ENCODE measurements at regions of chr17 and their contacts with region 1.

Region 1: DNA sequence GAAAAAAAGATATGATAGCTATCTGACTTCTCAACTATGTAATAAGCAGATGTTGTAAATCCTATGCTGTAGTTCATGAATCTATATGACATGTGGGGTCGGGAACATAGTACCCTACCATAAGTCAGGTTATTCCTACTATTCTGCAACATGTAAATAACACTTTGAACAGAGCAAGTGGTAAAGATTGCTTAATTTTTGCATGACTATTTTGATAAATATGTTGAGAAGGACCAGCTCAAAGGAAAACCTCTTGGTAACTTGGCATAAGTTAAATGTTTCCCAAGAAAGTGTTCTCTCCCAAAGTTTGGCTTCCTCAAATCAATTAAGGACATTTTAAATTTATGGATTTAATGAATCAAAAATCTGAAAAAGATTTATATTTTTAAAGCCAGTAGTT is 62.1 kb downstream of the ABHD15 start:
- DNase-seq: no peak
- ATAC-seq: no peak
- H3K4me3 ChIP-seq: no peak overlapping the region
- H3K27ac ChIP-seq: no peak overlapping the region
- H3K4me1 ChIP-seq: no peaks in the 10 kb centered on the region
- H3K27me3 ChIP-seq: no peaks in the 10 kb centered on the region
- CTCF ChIP-seq: no peak
- POLR2A ChIP-seq: no peak
- RAD21 ChIP-seq: no peak

Region 2: DNA sequence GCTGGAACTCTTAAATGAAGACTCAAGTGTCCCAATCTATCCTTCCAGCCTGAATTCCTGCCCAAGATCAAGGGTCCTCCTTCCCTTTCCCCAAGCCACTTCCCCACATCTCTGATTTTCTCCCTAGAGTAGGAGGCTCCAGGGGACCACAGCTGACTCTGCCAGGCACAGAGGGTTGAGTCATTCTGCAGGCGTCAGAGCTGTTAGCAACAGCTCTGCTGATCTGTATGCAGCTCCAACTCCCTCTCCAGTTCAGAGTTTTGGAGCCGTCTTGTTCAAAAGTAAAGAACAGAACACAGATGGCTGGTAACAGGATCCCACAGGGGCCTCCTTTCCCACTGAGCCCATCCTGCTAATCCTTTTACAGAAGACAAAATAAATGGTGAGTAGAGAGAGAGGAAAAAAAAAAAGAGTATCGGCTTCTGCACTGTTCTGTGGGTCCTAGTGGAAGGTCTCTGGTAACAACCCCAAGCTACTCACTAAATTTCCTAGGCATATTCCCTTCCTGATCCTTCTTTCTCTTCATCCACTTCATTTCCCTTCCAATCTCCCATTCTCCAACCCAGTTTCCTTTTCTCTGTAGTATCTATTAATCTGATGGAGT is 127.9 kb before region 1 on chr17:
- CTCF ChIA-PET with region 1: no interaction called
- POLR2A ChIA-PET with region 1: no interaction called
- RAD21 ChIA-PET with region 1: no interaction called
- intact Hi-C with region 1: no loop called
- DNase-seq: no peak
- ATAC-seq: no peak; the same call in 1 of the 2 replicates
- H3K4me3 ChIP-seq: no peak overlapping the region
- H3K27ac ChIP-seq: no peak overlapping the region
- H3K4me1 ChIP-seq: peaks cover 0 to 17% of the 10 kb centered on the region in 2 experiments; a peak in 2 of 4 replicates
- H3K27me3 ChIP-seq: no peaks in the 10 kb centered on the region
- CTCF ChIP-seq: no peak
- POLR2A ChIP-seq: no peak
- RAD21 ChIP-seq: no peak

Region 3: DNA sequence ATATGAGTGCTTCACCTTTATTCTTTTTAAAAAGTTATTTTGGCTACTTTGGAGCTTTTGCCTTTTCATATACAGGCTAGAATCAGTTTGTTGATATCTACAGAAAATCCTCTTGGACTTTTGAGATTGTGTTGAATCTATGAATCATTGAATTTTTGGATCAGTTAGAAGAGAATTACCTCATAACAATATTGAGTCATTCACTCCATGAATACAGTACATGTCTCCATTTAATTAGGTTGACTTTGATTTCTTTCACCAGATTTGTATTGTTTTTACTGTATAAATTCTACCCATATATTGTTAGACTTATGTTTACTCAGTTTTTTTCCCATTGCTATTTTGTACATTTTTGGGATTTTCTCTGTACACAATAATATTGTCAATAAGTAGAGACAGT is 60.1 kb before region 1 on chr17:
- CTCF ChIA-PET with region 1: no interaction called
- POLR2A ChIA-PET with region 1: no interaction called
- RAD21 ChIA-PET with region 1: no interaction called
- intact Hi-C with region 1: no loop called
- DNase-seq: no peak
- ATAC-seq: no peak
- H3K4me3 ChIP-seq: no peak overlapping the region
- H3K27ac ChIP-seq: no peak overlapping the region
- H3K4me1 ChIP-seq: no peaks in the 10 kb centered on the region
- H3K27me3 ChIP-seq: no peaks in the 10 kb centered on the region
- CTCF ChIP-seq: no peak
- POLR2A ChIP-seq: no peak
- RAD21 ChIP-seq: no peak

Region 4: GRCh38 chr17:29474297-29474696 is 30.4 kb before region 1 on chr17:
- CTCF ChIA-PET with region 1: no interaction called
- POLR2A ChIA-PET with region 1: no interaction called
- RAD21 ChIA-PET with region 1: no interaction called
- intact Hi-C with region 1: loop called (anchors 5 kb)
- DNase-seq: no peak
- ATAC-seq: no peak
- H3K4me3 ChIP-seq: no peak overlapping the region
- H3K27ac ChIP-seq: no peak overlapping the region
- H3K4me1 ChIP-seq: no peaks in the 10 kb centered on the region
- H3K27me3 ChIP-seq: no peaks in the 10 kb centered on the region
- CTCF ChIP-seq: no peak
- POLR2A ChIP-seq: no peak
- RAD21 ChIP-seq: no peak

Region 5: DNA sequence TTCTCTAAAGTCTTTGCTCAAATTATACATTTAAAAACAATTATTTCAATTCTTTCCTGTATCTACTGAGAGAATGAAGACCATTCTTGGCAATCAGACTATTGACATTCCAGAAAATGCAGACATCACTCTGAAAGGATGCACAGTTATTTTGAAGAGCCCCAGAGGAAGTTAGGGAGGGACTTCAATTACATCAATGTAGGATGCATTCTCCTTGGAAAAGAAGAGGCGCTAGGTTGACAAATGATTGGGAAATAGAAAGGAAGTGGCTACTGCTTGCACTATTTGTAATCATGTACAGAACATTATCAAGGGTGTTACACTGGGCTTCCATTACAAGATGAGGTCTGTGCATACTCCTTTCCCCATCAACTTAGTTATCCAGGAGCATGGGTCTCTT is 351.0 kb after region 1 on chr17:
- CTCF ChIA-PET with region 1: no interaction called
- POLR2A ChIA-PET with region 1: no interaction called
- RAD21 ChIA-PET with region 1: no interaction called
- intact Hi-C with region 1: no loop called
- DNase-seq: no peak
- ATAC-seq: no peak
- H3K4me3 ChIP-seq: no peak overlapping the region
- H3K27ac ChIP-seq: no peak overlapping the region
- H3K4me1 ChIP-seq: peaks cover 0 to 6% of the 10 kb centered on the region in 2 experiments; a peak in 2 of 4 replicates
- H3K27me3 ChIP-seq: no peaks in the 10 kb centered on the region
- CTCF ChIP-seq: no peak
- POLR2A ChIP-seq: no peak
- RAD21 ChIP-seq: no peak

Measured in HCT116 (cell line).